ENCODE measurements at regions of chr15 and their contacts with region 1.

Region 1: GRCh38 chr15:95323804-95324203 is 1006.7 kb upstream of the NR2F2 start:
- DNase-seq: no peak
- H3K4me3 Mint-ChIP-seq: no peak overlapping the region
- H3K27ac Mint-ChIP-seq: no peak overlapping the region
- H3K4me1 Mint-ChIP-seq: peaks cover 5% of the 10 kb centered on the region
- H3K27me3 Mint-ChIP-seq: peaks cover 43% of the 10 kb centered on the region

Region 2: GRCh38 chr15:95269242-95270183 is 54.3 kb before region 1 on chr15:
- CTCF ChIA-PET with region 1: no interaction called
- intact Hi-C with region 1: loop called (anchors 5 kb)
- DNase-seq: no peak
- H3K4me3 Mint-ChIP-seq: no peak overlapping the region
- H3K27ac Mint-ChIP-seq: no peak overlapping the region
- H3K4me1 Mint-ChIP-seq: no peaks in the 10 kb centered on the region
- H3K27me3 Mint-ChIP-seq: peaks cover 12% of the 10 kb centered on the region

Region 3: DNA sequence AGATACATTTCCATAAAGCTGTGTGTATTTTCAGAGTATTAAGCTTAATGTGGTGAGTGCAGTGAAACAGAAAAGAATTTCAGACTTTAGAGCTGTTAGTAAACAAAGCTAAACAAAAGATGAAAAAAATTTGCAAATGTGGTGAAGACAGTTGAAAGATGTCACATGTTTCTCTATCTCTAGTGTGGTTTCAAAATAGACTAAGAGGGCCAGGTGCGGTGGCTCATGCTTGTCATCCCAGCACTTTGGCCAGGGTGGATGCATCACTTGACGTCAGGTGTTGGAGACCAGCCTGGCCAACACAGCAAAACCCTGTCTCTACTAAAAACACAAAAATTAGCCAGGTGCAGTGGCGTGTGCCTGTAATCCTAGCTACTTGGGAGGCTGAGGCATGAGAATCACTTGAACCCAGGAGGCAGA is 540.7 kb after region 1 on chr15:
- CTCF ChIA-PET with region 1: no interaction called
- intact Hi-C with region 1: no loop called
- DNase-seq: no peak
- H3K4me3 Mint-ChIP-seq: no peak overlapping the region
- H3K27ac Mint-ChIP-seq: no peak overlapping the region
- H3K4me1 Mint-ChIP-seq: peaks cover 2% of the 10 kb centered on the region
- H3K27me3 Mint-ChIP-seq: peaks cover 5% of the 10 kb centered on the region